Naive thymus-derived CD8-positive, alpha-beta T cell (primary cell): ENCODE measurements at regions of chr12 and their contacts with region 1.

Region 1: DNA sequence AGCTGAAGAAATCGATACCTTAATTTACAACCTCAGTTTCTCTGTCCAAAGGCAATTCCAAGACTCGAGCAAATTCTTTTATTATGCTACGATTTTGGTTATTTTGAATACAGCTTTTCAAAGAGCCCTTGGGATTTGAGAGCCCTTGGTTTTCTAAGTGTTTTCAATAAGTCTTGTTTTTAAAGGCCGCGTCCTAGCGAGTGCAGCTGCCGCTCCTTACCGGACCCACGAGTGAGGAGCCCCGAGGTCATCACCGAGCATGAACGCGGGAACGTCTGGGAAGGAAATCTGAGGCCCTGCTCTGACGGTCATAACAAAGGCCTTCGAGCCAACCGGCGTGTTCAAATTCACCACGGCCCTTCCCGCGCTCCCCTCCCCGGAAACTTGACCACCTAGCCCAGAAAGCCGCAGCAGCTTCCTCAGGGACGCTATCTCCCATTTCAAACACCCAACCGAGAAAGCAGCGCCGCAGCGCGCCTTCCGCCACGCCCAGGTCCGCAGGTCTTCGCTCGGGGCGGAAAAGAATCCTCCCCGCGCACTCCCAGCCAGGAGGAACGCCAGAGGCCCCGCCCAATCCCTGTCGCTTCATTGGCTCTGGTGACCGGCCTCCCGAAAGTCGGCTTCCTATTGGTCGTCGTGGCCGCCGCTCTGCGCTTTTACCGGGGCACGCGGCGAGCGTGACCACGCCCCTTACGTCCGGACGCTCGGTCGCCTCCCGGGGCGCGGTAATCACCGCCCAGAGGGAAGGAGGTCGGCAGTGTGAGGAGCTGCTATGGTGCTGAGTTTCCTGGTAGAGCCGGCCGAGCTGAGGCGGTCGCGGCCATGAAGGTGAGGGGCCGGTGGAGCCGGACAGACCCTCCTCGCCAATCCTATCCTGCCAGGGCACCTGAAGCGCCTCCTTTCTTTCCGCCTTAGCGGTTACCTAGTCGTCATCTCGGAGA is at the start of gene RNF34:
- DNase-seq: peak; percentile 91 to 99 (median 96)
- ATAC-seq: peak; percentile 89 to 90
- H3K4me3 Mint-ChIP-seq: peak within 1 kb of the TSS; percentile 83 to 98 (median 93)
- H3K27ac Mint-ChIP-seq: peak within 1 kb of the TSS; percentile 87 to 98 (median 95)
- H3K4me1 Mint-ChIP-seq: peaks cover 15 to 47% (median 33%) of the 10 kb centered on the region in 4 donors
- H3K27me3 Mint-ChIP-seq: no peaks in the 10 kb centered on the region
- polyA plus RNA-seq, gene RNF34: 34.5 to 49.0 (median 36.2) TPM

Region 2: GRCh38 chr12:121351820-121352681 is 47.6 kb before region 1 on chr12 and contains the start of gene ANAPC5:
- POLR2A ChIA-PET with region 1: interaction called, 36 read pairs
- DNase-seq: peak; percentile 65 to 94 (median 88)
- ATAC-seq: peak; percentile 97
- H3K4me3 Mint-ChIP-seq: peak within 1 kb of the TSS; percentile 87 to 100 (median 98)
- H3K27ac Mint-ChIP-seq: peak within 1 kb of the TSS; percentile 92 to 99 (median 97)
- H3K4me1 Mint-ChIP-seq: peaks cover 13 to 49% (median 46%) of the 10 kb centered on the region in 4 donors
- H3K27me3 Mint-ChIP-seq: peaks cover 0 to 2% (median 0%) of the 10 kb centered on the region in 5 donors
- polyA plus RNA-seq, gene ANAPC5: 91.2 to 150 (median 135) TPM

Region 3: DNA sequence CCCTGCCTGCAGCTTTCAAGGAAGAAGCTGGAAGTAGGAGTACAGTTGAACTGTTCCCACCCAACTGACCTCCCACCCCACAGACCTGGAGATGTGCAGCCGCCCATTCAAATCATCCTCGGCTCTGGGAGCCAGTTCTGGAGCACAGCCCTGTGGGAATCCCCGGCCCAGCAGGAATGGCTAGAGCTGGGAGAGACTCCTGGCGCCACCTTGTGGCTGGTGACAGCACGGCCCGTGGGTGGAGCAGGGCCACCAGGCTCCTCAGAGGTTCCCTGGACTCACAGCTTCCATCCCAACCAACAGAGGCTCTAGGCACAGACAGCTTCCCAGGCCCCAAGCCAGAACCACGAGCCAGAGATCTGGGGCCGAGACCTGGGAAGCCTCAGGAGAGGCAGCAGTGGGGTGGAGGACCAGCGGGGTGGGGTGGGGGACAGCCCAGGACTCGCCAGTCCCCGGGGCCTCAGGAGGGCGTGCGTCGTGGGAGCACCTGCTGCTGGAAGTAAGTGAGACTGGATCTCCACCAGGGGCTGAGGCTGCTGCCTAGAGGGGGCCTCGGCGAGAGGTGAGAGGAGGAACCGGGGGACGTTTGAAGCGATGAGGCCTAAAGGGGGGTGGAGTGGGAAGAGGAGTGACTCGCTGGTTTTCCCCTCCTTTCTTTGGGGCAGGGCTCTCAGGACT is 43.7 kb after region 1 on chr12:
- POLR2A ChIA-PET with region 1: interaction called, 10 read pairs
- DNase-seq: peak in 9 of 10 donors; percentile 31 to 61 (median 55)
- ATAC-seq: peak; percentile 76 to 89
- H3K4me3 Mint-ChIP-seq: no peak overlapping the region
- H3K27ac Mint-ChIP-seq: peak overlapping the region in 4 of 10 donors; percentile 40 to 78 (median 65)
- H3K4me1 Mint-ChIP-seq: peaks cover 2 to 10% (median 7%) of the 10 kb centered on the region in 4 donors
- H3K27me3 Mint-ChIP-seq: no peaks in the 10 kb centered on the region

Region 4: DNA sequence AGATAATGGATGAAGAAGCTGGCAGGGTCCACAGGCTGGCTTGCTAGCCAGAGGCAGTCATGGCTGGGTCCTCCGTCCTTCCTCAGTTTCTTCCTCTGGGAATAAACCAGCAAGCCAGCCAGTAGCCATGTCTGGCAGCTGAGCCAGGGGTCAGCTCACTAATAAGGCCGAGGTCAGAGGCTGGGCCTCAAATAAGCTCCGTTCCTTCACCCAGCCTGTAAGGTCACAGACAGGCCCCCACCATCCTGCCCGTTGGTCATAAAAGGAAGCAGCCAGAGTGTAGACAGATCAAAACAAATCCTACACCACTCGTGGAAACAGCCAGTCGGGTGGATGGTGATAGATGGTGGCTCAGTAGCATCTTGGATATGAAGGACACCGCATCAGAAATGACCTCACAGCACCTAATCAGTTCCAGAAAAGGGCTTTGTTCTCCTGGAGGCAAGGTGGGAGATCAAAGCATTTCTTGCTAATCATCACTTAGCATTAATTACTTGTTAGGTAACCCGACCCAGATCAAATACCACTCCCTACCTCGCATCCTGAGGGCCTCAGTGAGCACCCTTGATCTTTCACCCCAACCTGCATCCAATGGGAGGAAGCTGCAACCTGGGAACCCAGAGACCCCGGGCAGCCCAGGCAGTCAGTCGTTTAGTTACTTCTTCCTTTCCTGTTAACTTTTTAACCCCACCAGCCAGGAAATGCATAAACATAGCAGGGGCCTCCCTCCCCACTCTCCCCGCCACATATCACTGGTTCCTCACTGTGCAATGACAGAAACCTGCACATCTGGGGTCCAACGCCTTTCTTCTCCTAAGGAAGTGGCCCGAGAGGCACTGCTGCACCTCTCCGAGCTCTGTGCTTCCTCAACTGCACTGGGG is 91.0 kb after region 1 on chr12:
- POLR2A ChIA-PET with region 1: no interaction called
- DNase-seq: peak in 1 of 10 donors; percentile 36
- ATAC-seq: peak; percentile 35 to 63
- H3K4me3 Mint-ChIP-seq: peak overlapping the region in 9 of 10 donors; percentile 57 to 87 (median 76)
- H3K27ac Mint-ChIP-seq: peak overlapping the region; percentile 3 to 92 (median 82)
- H3K4me1 Mint-ChIP-seq: peaks cover 9 to 27% (median 17%) of the 10 kb centered on the region in 4 donors
- H3K27me3 Mint-ChIP-seq: no peaks in the 10 kb centered on the region